ENCODE measurements at regions of chr1 and their contacts with region 1.

Region 1: DNA sequence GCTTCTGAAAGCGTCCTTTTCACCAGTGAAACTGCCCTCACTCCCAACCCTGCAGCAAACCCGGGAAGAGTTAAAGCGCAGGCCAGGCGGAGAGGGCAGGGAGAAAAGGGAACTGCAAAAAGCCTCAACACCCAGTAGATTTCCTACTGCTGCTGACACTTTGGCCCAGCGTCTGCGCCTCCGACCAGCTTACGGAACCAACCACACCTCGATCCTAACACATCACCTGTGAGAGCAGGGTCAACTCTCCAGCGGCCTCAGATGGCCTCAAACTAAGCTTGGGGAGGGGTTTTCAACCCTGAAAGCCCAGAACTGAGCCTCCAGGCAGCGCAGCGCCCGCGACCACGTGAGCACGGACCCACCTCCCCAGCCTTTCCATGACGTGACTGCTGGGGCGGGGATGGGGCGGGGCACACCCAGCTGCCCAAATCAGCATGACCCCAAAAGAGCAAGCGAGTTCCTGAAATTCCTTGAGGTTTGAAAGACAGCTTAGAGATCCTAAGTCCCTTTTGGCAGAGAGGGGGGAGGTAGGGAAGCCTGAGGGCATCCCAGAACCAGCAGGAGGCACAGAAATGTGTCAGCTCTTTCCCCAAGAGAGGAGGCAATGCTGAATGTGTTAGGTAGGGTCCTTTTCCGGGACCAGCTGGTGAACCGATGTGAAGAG is 59.1 kb downstream of the ITPKB start:
- DNase-seq: no peak
- ATAC-seq: peak; percentile 68
- H3K4me3 ChIP-seq: peak overlapping the region; percentile 57; the same call in 1 of the 2 replicates
- H3K27ac ChIP-seq: peak overlapping the region; percentile 51
- H3K4me1 ChIP-seq: peaks cover 63% of the 10 kb centered on the region
- H3K27me3 ChIP-seq: no peaks in the 10 kb centered on the region
- CTCF ChIP-seq: no peak
- EP300 ChIP-seq: no peak
- POLR2A ChIP-seq: peak; percentile 47; the same call in 1 of the 2 replicates
- RAD21 ChIP-seq: no peak

Region 2: GRCh38 chr1:226608699-226609505 is 71.1 kb before region 1 on chr1:
- CTCF ChIA-PET with region 1: no interaction called
- POLR2A ChIA-PET with region 1: no interaction called
- RAD21 ChIA-PET with region 1: no interaction called
- SMC1A ChIA-PET with region 1: no interaction called
- in situ Hi-C with region 1: no loop called
- intact Hi-C with region 1: no loop called
- DNase-seq: no peak
- ATAC-seq: peak; percentile 96
- H3K4me3 ChIP-seq: no peak overlapping the region
- H3K27ac ChIP-seq: no peak overlapping the region
- H3K4me1 ChIP-seq: no peaks in the 10 kb centered on the region
- H3K27me3 ChIP-seq: peaks cover 0 to 1% of the 10 kb centered on the region in 2 experiments; a peak in 3 of 4 replicates
- CTCF ChIP-seq: peak; percentile 71 to 88 (median 84)
- EP300 ChIP-seq: no peak
- POLR2A ChIP-seq: no peak
- RAD21 ChIP-seq: peak; percentile 66

Region 3: GRCh38 chr1:226634166-226634588 is 45.8 kb before region 1 on chr1:
- CTCF ChIA-PET with region 1: interaction called, 11 read pairs
- POLR2A ChIA-PET with region 1: interaction called, 6 read pairs
- RAD21 ChIA-PET with region 1: interaction called, 5 read pairs
- SMC1A ChIA-PET with region 1: interaction called, 3 read pairs
- in situ Hi-C with region 1: no loop called
- intact Hi-C with region 1: no loop called
- DNase-seq: no peak
- ATAC-seq: peak; percentile 97
- H3K4me3 ChIP-seq: no peak overlapping the region
- H3K27ac ChIP-seq: no peak overlapping the region
- H3K4me1 ChIP-seq: peaks cover 21% of the 10 kb centered on the region
- H3K27me3 ChIP-seq: no peaks in the 10 kb centered on the region
- CTCF ChIP-seq: peak; percentile 85 to 96 (median 95)
- EP300 ChIP-seq: no peak
- POLR2A ChIP-seq: no peak
- RAD21 ChIP-seq: peak; percentile 94

Region 4: DNA sequence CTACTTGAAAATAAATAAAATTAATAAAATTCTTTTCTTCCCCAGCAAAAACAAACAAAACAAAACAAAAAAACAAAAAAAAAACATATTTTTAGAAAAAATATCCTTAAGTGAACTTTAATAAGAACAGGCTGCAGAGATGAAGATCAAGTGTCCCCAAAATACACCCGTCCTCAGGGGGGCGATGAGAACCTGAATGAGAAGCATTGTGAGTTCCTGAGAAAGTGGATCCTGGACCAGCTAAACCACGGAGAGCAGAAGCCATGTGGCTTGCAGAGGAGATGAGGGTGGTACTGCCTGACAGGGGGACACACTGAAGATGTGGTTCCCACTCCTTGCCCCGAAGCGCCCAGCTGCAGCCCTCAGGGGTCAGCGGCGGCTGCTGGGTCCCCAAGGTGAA is 30.2 kb before region 1 on chr1:
- CTCF ChIA-PET with region 1: interaction called, 4 read pairs
- POLR2A ChIA-PET with region 1: interaction called, 4 read pairs
- RAD21 ChIA-PET with region 1: interaction called, 10 read pairs
- SMC1A ChIA-PET with region 1: interaction called, 20 read pairs
- in situ Hi-C with region 1: no loop called
- intact Hi-C with region 1: no loop called
- DNase-seq: no peak
- ATAC-seq: no peak
- H3K4me3 ChIP-seq: no peak overlapping the region
- H3K27ac ChIP-seq: no peak overlapping the region
- H3K4me1 ChIP-seq: peaks cover 22% of the 10 kb centered on the region
- H3K27me3 ChIP-seq: no peaks in the 10 kb centered on the region
- CTCF ChIP-seq: peak; percentile 16 to 38 (median 36); a peak in 3 of 6 replicates
- EP300 ChIP-seq: no peak
- POLR2A ChIP-seq: no peak
- RAD21 ChIP-seq: peak; percentile 56

Region 5: GRCh38 chr1:226662642-226663326 is 17.2 kb before region 1 on chr1:
- CTCF ChIA-PET with region 1: interaction called, 8 read pairs
- POLR2A ChIA-PET with region 1: interaction called, 13 read pairs
- RAD21 ChIA-PET with region 1: interaction called, 30 read pairs
- SMC1A ChIA-PET with region 1: interaction called, 67 read pairs
- in situ Hi-C with region 1: no loop called
- intact Hi-C with region 1: loop called (anchors 1 kb)
- DNase-seq: peak; percentile 99
- ATAC-seq: peak; percentile 95
- H3K4me3 ChIP-seq: peak overlapping the region; percentile 5; the same call in 1 of the 2 replicates
- H3K27ac ChIP-seq: peak overlapping the region; percentile 48
- H3K4me1 ChIP-seq: peaks cover 57% of the 10 kb centered on the region
- H3K27me3 ChIP-seq: no peaks in the 10 kb centered on the region
- CTCF ChIP-seq: no peak
- EP300 ChIP-seq: peak; percentile 98
- POLR2A ChIP-seq: no peak
- RAD21 ChIP-seq: peak; percentile 14; the same call in 1 of the 2 replicates

Region 6: GRCh38 chr1:226697151-226697939 is 17.4 kb after region 1 on chr1:
- CTCF ChIA-PET with region 1: interaction called, 8 read pairs
- POLR2A ChIA-PET with region 1: interaction called, 8 read pairs
- RAD21 ChIA-PET with region 1: interaction called, 15 read pairs
- SMC1A ChIA-PET with region 1: interaction called, 16 read pairs
- in situ Hi-C with region 1: no loop called
- intact Hi-C with region 1: no loop called
- DNase-seq: peak; percentile 67
- ATAC-seq: peak; percentile 85
- H3K4me3 ChIP-seq: no peak overlapping the region
- H3K27ac ChIP-seq: peak overlapping the region; percentile 60
- H3K4me1 ChIP-seq: peaks cover 29% of the 10 kb centered on the region
- H3K27me3 ChIP-seq: no peaks in the 10 kb centered on the region
- CTCF ChIP-seq: no peak
- EP300 ChIP-seq: peak in 1 of 2 experiments; percentile 54; a peak in 1 of 4 replicates
- POLR2A ChIP-seq: no peak
- RAD21 ChIP-seq: no peak

Region 7: DNA sequence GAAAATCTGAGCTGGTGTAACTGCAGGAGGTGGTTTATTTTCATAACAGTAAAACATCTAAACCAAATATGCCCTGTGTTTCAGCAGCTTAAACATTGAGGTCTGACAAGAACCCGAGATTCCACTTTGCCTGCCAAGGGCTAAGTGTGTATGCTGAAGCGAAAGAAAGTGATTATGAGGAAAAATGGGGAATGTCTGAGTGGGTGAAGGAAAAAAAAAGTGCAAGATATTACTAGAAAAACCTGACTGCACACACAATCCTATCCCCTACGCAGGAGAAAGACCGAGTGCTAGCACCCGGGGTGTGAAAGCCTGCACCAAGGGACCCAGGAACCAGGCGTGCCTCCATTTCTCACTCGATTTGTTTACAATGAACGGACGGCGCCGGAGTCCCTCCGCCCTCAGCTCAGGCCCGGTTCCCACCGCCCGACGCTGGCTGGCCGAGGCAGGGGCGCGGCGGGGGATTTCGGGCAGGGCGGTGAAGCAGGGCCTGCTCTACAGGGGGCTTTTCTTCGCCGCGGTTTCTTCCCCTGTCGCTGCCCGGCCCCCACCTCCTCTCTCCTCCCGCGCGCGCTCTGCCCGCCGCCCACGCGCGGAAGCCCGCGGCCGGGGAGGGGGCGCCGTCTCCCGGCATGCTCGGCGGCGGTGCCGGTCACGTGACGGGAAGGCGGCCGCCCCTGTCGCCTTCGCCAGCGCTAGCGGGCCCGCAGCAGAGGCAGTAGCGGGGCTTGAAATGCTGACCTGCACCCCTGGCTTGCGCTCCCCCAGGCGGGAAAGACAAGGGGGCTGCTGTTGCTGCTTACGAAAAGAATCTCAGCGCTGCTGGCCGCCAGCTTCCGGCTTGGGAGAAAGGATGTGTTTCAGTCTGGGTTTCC is 23.2 kb after region 1 on chr1:
- CTCF ChIA-PET with region 1: interaction called, 7 read pairs
- POLR2A ChIA-PET with region 1: interaction called, 8 read pairs
- RAD21 ChIA-PET with region 1: interaction called, 15 read pairs
- SMC1A ChIA-PET with region 1: interaction called, 16 read pairs
- in situ Hi-C with region 1: no loop called
- intact Hi-C with region 1: no loop called
- DNase-seq: no peak
- ATAC-seq: peak; percentile 92
- H3K4me3 ChIP-seq: peak overlapping the region; percentile 54
- H3K27ac ChIP-seq: peak overlapping the region; percentile 92
- H3K4me1 ChIP-seq: peaks cover 12% of the 10 kb centered on the region
- H3K27me3 ChIP-seq: no peaks in the 10 kb centered on the region
- CTCF ChIP-seq: no peak
- EP300 ChIP-seq: peak in 1 of 2 experiments; percentile 41; a peak in 1 of 4 replicates
- POLR2A ChIP-seq: peak; percentile 93
- RAD21 ChIP-seq: no peak

Measured in GM12878 (cell line).